Activated naive CD8-positive, alpha-beta T cell treated with anti-CD3 and anti-CD28 coated beads, Interleukin-2, amount 10 ng/mL, durations not matched to agents 7 days and 5 days (primary cell): ENCODE measurements at regions of chr17 and their contacts with region 1.

Region 1: GRCh38 chr17:38868817-38869525 is 887 bp upstream of the LASP1 start:
- DNase-seq: peak; percentile 91
- ATAC-seq: peak; percentile 45
- H3K4me3 Mint-ChIP-seq: peak overlapping the region; percentile 97
- H3K27ac Mint-ChIP-seq: peak overlapping the region; percentile 91
- H3K4me1 Mint-ChIP-seq: peaks cover 42% of the 10 kb centered on the region
- H3K27me3 Mint-ChIP-seq: no peaks in the 10 kb centered on the region

Region 2: DNA sequence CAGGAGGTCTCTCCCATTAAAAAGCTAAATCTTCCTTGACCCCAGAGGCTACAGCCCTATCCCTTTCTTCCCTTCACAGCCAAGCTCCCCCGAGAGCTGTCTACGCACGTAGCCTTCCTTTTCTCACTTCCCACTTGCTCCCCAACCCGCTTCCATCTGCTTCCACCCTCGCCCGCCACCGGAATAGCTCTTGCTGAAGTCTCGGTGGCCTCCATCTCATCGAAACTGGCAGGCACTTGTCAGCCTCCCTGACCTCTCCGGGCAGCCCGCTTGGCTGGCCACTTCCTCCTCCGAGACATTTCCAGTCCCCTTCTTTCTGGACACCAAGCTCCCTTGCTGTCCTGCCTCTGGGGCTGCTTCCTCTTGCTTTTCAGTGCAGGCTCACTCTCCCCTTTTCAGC is 183.5 kb before region 1 on chr17:
- POLR2A ChIA-PET with region 1: no interaction called
- DNase-seq: no peak
- ATAC-seq: no peak
- H3K4me3 Mint-ChIP-seq: no peak overlapping the region
- H3K27ac Mint-ChIP-seq: no peak overlapping the region
- H3K4me1 Mint-ChIP-seq: no peaks in the 10 kb centered on the region
- H3K27me3 Mint-ChIP-seq: peaks cover 9% of the 10 kb centered on the region

Region 3: DNA sequence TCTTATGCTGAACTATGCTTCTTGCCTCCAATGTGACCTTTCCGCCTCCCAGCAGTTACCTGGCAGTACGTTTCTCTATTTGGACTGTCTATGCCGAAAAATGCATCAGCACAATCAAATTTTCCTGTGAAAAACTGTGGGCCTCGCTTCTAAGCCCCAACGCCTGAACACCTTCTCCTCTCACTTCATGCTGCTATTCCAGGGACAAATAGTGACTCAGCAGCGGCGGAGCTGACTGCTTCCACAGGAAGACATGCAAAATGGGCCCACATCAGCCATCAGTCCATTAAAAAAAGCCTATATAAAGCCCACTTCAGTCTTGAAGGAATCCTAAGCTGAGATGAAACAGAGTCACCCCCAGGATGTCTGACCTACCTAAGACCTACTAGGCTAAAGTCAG is 59.1 kb before region 1 on chr17:
- POLR2A ChIA-PET with region 1: no interaction called
- DNase-seq: no peak
- ATAC-seq: no peak
- H3K4me3 Mint-ChIP-seq: no peak overlapping the region
- H3K27ac Mint-ChIP-seq: no peak overlapping the region
- H3K4me1 Mint-ChIP-seq: no peaks in the 10 kb centered on the region
- H3K27me3 Mint-ChIP-seq: no peaks in the 10 kb centered on the region

Region 4: GRCh38 chr17:38824899-38825761 is 43.8 kb before region 1 on chr17 and contains the start of gene CWC25:
- POLR2A ChIA-PET with region 1: interaction called, 15 read pairs
- DNase-seq: peak; percentile 99
- ATAC-seq: peak; percentile 77
- H3K4me3 Mint-ChIP-seq: peak within 1 kb of the TSS; percentile 100
- H3K27ac Mint-ChIP-seq: peak within 1 kb of the TSS; percentile 99
- H3K4me1 Mint-ChIP-seq: peaks cover 22% of the 10 kb centered on the region
- H3K27me3 Mint-ChIP-seq: no peaks in the 10 kb centered on the region
- total RNA-seq, gene CWC25: 35.2 to 37.5 TPM

Region 5: DNA sequence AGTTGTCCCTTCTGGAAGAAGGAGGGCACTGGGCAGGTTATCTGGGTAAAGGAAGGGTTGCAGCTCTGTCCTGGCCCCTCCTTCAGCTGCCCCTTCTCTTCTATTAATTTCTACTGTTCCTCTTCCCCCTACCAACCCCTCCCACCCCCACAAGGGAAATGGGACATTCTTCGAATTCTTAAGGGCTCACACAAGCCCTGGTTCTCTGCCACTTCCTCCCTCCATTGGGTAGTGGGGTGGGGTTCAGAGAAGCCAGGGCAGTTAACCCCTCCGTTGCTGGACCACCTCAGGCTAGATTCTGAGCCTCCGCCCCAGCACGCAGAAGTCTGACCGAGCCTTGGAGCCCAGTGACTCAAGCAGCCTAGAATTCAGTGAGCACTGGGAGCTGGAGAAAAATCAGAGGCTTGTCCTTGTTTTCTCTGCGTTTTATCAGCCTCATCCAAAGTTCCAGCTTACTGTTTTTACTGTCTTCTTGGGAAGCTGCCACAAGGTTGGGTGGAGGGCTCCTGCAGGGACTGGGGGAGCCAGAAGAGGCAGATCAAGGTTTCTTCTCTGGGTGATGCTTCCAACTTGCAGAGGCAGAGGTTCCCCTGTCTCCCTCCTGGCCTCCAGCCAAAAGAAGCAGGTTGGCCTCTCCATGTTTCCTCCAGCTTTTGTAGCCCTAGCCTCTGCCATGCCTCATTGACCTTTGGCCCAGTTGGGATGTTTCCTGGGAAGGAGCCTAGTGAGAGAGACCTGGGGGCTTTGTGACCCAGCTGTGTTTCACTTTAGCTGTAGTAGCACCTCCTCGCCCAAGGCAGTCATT is 11.1 kb after region 1 on chr17:
- POLR2A ChIA-PET with region 1: interaction called, 81 read pairs
- DNase-seq: no peak
- ATAC-seq: peak; percentile 28
- H3K4me3 Mint-ChIP-seq: peak overlapping the region; percentile 80
- H3K27ac Mint-ChIP-seq: peak overlapping the region; percentile 89
- H3K4me1 Mint-ChIP-seq: peaks cover 86% of the 10 kb centered on the region
- H3K27me3 Mint-ChIP-seq: no peaks in the 10 kb centered on the region

Region 6: GRCh38 chr17:38898812-38899348 is 29.9 kb after region 1 on chr17:
- POLR2A ChIA-PET with region 1: interaction called, 60 read pairs
- DNase-seq: peak; percentile 81
- ATAC-seq: peak; percentile 71
- H3K4me3 Mint-ChIP-seq: peak overlapping the region; percentile 68
- H3K27ac Mint-ChIP-seq: peak overlapping the region; percentile 91
- H3K4me1 Mint-ChIP-seq: peaks cover 63% of the 10 kb centered on the region
- H3K27me3 Mint-ChIP-seq: no peaks in the 10 kb centered on the region

Region 7: DNA sequence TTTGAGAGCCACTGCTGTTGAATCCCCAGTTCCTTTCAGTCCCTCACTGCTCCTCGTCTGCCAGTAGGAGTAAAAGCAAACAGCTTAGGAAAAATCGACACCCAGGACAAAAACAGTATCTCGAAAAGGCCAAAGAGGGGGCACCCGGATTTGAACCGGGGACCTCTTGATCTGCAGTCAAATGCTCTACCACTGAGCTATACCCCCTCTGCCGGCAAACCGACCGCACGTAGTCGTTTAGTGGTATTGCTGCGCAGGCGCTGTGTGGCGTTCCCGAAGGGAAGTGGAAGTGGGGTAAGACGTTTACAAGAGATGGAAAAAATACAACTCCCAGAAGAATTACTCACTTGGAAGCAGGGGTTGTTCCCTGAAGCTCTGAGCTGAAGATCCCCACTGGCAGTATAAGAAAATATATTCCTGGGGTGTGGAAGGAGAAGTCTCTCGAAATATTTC is 284.7 kb after region 1 on chr17:
- POLR2A ChIA-PET with region 1: interaction called, 14 read pairs
- DNase-seq: peak; percentile 95
- ATAC-seq: peak; percentile 47
- H3K4me3 Mint-ChIP-seq: peak overlapping the region; percentile 98
- H3K27ac Mint-ChIP-seq: peak overlapping the region; percentile 94
- H3K4me1 Mint-ChIP-seq: peaks cover 32% of the 10 kb centered on the region
- H3K27me3 Mint-ChIP-seq: peaks cover 16% of the 10 kb centered on the region